ENCODE measurements at regions of chr9 and their contacts with region 1.

Region 1: DNA sequence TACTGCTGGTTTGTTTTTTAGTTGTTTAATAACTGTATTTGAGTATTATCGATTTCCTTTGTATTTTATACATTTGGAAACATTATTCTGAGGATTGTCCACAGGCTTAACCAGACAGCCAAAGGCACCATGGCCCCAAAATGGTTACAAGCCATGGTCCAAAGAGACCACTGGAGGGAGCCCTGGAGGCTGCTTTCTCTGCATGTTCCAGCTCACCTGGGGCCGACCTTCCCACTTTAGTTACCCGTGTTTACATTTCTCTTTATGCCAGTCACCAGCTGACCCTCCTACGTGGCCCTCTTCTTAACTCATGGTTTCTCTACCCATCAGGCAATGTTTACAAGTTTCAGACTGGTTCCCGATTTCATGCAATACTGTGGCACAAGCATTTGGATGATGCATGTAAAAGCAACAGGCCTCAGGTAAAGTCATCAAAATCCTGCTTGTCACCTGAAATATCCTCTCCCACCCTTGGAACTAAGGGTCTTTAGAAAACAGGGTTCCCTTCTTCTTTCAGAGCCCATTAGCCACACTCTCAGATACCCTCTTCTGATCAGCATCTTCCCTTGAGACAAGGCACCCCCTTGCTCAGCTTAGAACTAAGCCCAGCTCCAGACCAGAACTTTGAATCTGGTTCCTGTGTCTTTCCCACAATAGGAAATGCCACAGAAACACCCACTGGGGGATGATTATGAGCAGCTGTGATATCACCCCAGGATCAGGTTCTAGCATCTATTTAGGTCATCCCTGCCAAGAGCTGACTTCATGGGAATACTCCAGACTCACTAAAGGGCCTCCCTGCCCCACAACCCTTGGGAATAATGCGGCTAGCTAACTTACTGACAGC is 49.9 kb upstream of the GARNL3 start:
- DNase-seq: peak; percentile 45
- H3K4me3 ChIP-seq: no peak overlapping the region
- H3K27ac ChIP-seq: no peak overlapping the region
- H3K4me1 ChIP-seq: peaks cover 10% of the 10 kb centered on the region
- H3K27me3 ChIP-seq: no peaks in the 10 kb centered on the region
- CTCF ChIP-seq: peak; percentile 84

Region 2: DNA sequence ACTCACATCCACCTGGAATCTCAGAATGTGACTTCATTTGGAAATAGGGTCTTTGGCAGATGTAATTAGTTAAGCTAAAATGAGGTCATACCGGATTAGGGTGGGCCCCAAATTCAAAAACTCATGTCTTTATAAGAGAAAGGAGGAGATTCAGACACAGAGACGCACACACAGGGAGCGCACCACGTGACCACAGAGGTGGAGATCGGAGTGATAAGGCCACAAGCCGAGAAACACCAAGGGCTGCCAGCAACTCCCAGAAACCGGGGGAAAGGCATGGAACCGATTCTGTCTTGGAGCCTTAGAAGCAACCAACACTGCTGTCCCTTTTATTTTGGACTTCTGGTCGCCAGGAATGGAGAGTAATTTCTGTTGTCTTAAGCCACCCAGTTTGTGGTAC is 632.8 kb before region 1 on chr9:
- CTCF ChIA-PET with region 1: no interaction called
- POLR2A ChIA-PET with region 1: no interaction called
- intact Hi-C with region 1: no loop called
- DNase-seq: no peak
- H3K4me3 ChIP-seq: no peak overlapping the region
- H3K27ac ChIP-seq: no peak overlapping the region
- H3K4me1 ChIP-seq: no peaks in the 10 kb centered on the region
- H3K27me3 ChIP-seq: no peaks in the 10 kb centered on the region
- CTCF ChIP-seq: no peak

Region 3: DNA sequence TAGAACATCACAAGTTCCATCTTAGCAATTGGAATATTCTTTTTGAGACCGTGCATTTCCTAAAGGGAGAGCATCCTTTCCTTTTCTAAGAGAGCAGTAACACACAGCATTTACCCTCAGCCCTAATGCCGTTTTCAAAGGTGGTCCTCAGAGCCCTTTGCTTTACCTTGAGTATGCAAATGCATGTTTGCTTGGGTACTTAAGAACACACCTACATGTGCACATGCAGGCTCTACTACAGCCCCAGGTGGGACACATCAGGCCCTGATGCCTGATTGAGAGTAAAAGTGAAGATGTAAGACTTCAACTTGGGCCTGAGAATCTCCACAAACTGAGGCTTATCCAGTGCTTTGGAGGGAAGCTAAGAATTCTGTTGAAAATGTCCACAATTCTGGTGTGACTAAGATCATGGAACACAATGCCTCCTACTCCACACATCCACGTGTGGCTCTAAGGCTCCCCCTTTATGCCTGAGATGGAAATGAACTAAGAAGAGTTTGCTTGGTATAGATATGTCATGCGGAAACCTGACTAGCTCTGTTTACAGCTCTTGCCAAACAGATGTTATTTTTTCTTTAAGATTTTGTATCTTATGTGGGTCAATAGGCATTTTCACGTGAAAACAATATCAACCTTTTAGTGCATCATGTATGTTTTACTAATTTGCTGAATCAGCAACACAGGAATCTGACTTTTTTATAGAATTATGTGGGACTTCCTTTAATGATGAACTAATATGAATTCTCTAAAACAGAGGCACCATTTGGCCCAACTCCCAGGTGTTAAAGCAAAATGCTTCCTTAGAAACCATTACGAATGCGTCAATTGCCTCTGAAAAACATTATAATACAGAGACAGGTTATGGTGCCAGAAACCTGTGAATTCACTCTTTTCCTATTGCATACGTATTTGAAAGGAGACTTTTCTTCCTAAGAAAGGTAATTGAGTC is 133.5 kb after region 1 on chr9:
- CTCF ChIA-PET with region 1: interaction called, 3 read pairs
- POLR2A ChIA-PET with region 1: no interaction called
- intact Hi-C with region 1: loop called (anchors 1 kb)
- DNase-seq: peak; percentile 52
- H3K4me3 ChIP-seq: no peak overlapping the region
- H3K27ac ChIP-seq: no peak overlapping the region
- H3K4me1 ChIP-seq: no peaks in the 10 kb centered on the region
- H3K27me3 ChIP-seq: no peaks in the 10 kb centered on the region
- CTCF ChIP-seq: peak; percentile 55

Region 4: GRCh38 chr9:127396808-127397497 is 182.3 kb after region 1 on chr9 and contains the start of gene SLC2A8:
- CTCF ChIA-PET with region 1: interaction called, 6 read pairs
- POLR2A ChIA-PET with region 1: no interaction called
- intact Hi-C with region 1: loop called (anchors 5 kb)
- DNase-seq: peak; percentile 99
- H3K4me3 ChIP-seq: peak within 1 kb of the TSS; percentile 82
- H3K27ac ChIP-seq: peak within 1 kb of the TSS; percentile 55
- H3K4me1 ChIP-seq: peaks cover 5% of the 10 kb centered on the region
- H3K27me3 ChIP-seq: no peaks in the 10 kb centered on the region
- CTCF ChIP-seq: no peak
- total RNA-seq, gene SLC2A8: 12.7 and 17.1 TPM in 2 replicates